ENCODE measurements at regions of chr7 and their contacts with region 1.

Region 1: DNA sequence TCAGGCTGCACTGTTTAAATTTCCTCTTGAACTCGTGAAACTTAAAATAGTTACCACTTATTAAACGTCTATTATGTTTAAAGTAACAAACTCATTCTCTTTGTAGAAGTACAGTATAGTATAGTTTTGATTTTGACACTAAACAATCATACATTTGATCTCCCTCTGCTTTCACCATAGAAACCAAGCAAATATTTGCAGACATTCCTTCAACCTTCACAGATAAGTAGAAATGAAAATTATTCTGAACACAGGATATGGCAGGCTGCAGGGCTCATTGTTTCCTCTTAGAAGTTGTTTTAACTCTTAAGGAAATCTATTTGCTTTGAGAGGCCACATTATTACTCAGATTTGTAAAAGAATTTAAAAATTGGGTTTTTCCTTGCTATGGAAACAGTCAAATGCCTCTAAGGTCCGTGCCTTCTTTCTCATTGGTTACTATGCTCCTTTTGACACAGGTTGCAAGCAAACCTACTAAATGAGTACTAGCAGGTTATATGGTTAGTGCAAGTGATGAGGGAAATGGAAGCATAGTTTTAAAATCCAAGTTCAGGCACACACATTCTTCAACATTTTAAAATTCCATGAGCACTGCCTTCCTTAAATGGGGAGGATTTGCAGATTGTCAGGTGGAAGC is 92.8 kb upstream of the FAM133B start:
- DNase-seq: peak in 2 of 9 experiments; percentile 20 to 57
- ATAC-seq: peak; percentile 29
- H3K4me3 ChIP-seq: no peak overlapping the region
- H3K4me3 Mint-ChIP-seq: peak overlapping the region; percentile 2
- H3K27ac ChIP-seq: peak overlapping the region; percentile 35 to 72
- H3K27ac Mint-ChIP-seq: peak overlapping the region; percentile 89
- H3K4me1 ChIP-seq: peaks cover 56% of the 10 kb centered on the region
- H3K4me1 Mint-ChIP-seq: peaks cover 73% of the 10 kb centered on the region
- H3K27me3 ChIP-seq: no peaks in the 10 kb centered on the region
- H3K27me3 Mint-ChIP-seq: no peaks in the 10 kb centered on the region
- CTCF ChIP-seq: no peak

Region 2: DNA sequence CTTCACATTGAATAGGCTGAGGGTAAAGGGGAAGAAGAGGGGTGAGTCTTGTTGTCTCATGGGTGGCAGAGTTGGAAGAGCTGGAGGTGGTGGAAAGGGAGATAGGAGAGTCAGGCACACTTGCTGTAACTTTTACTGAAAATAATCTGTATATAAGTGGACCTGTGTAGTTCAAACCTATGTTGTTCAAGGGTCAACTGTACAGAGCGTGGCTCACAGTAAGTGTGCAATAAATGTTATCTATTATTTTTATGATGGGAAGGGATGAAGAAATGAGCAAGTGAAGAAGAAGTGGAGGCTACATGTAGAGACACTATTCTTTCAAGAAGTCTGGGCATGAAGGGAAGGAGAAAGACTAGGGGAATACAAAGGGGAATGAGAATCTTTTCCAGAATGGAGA is 21.4 kb before region 1 on chr7:
- CTCF ChIA-PET with region 1: no interaction called
- POLR2A ChIA-PET with region 1: no interaction called
- intact Hi-C with region 1: loop called in 1 of 2 experiments (anchors 2 kb)
- DNase-seq: no peak
- ATAC-seq: no peak
- H3K4me3 ChIP-seq: no peak overlapping the region
- H3K4me3 Mint-ChIP-seq: no peak overlapping the region
- H3K27ac ChIP-seq: no peak overlapping the region
- H3K27ac Mint-ChIP-seq: no peak overlapping the region
- H3K4me1 ChIP-seq: no peaks in the 10 kb centered on the region
- H3K4me1 Mint-ChIP-seq: peaks cover 23% of the 10 kb centered on the region
- H3K27me3 ChIP-seq: no peaks in the 10 kb centered on the region
- H3K27me3 Mint-ChIP-seq: no peaks in the 10 kb centered on the region
- CTCF ChIP-seq: no peak

Region 3: DNA sequence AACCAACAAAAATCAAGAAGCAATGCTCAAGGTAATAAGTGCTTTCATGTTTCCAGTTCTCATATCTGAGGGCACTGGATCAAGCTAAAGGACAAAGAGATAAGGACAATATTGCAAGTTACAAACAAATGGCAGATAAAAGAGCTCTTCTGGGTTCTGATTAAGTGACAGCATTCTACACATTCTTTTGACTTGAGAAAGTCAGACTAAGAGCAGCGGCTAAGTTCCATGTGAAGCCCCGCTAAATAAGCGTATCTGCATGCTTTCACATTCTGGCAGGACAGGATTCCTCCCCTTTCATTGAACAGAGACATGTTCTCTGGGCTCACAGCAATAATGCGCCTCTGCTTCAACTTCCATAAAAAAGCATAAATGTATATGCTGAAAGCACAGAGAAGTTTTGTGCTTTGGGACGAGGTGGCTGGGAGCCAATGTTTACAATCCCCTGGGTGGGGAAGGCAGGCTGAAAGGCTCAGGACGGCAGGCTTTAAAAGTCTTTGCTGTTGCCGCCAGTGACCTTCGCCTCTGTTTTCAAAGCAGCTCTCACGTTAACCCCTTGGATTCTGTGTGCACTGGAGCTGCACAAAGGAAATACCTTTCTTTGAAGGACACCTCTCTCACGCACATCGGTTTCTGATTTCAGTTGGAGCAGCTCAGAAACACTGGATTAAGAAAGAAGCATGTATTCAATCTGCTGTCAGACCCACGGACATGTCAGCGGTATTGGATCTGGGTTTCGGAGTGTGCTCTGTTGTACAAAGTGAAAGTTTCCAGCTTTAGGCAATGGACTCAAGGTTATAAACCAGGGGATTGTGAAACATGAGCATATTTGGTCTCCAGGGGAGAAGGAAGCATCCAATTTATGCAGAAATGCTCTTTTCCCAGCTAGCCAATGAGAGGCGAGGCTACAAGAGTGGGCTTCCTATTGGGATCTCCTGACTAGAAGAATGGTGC is 12.6 kb after region 1 on chr7:
- CTCF ChIA-PET with region 1: no interaction called
- POLR2A ChIA-PET with region 1: no interaction called
- intact Hi-C with region 1: no loop called
- DNase-seq: no peak
- ATAC-seq: no peak
- H3K4me3 ChIP-seq: no peak overlapping the region
- H3K4me3 Mint-ChIP-seq: peak overlapping the region; percentile 32
- H3K27ac ChIP-seq: no peak overlapping the region
- H3K27ac Mint-ChIP-seq: no peak overlapping the region
- H3K4me1 ChIP-seq: peaks cover 11% of the 10 kb centered on the region
- H3K4me1 Mint-ChIP-seq: peaks cover 16% of the 10 kb centered on the region
- H3K27me3 ChIP-seq: no peaks in the 10 kb centered on the region
- H3K27me3 Mint-ChIP-seq: no peaks in the 10 kb centered on the region
- CTCF ChIP-seq: no peak

Region 4: GRCh38 chr7:92717993-92718716 is 35.1 kb after region 1 on chr7:
- CTCF ChIA-PET with region 1: no interaction called
- POLR2A ChIA-PET with region 1: no interaction called
- intact Hi-C with region 1: loop called in 1 of 2 experiments (anchors 5 kb)
- DNase-seq: peak in 8 of 9 experiments; percentile 17 to 76 (median 44)
- ATAC-seq: peak; percentile 94
- H3K4me3 ChIP-seq: peak overlapping the region; percentile 41 to 56
- H3K4me3 Mint-ChIP-seq: peak overlapping the region; percentile 92
- H3K27ac ChIP-seq: peak overlapping the region; percentile 42 to 64
- H3K27ac Mint-ChIP-seq: peak overlapping the region; percentile 95
- H3K4me1 ChIP-seq: peaks cover 20% of the 10 kb centered on the region
- H3K4me1 Mint-ChIP-seq: peaks cover 29% of the 10 kb centered on the region
- H3K27me3 ChIP-seq: no peaks in the 10 kb centered on the region
- H3K27me3 Mint-ChIP-seq: no peaks in the 10 kb centered on the region
- CTCF ChIP-seq: no peak

Measured in CD8-positive, alpha-beta T cell (primary cell).